Left colon (tissue), 2 donors: ENCODE measurements at regions of chr16 and their contacts with region 1.

Region 1: GRCh38 chr16:46607529-46607928 is 13.7 kb downstream of the SHCBP1 start:
- DNase-seq: no peak
- ATAC-seq: no peak

Region 2: GRCh38 chr16:46555951-46556350 is 51.6 kb before region 1 on chr16:
- intact Hi-C with region 1: loop called in 1 of 2 experiments (anchors 5 kb)
- DNase-seq: no peak
- ATAC-seq: no peak

Region 3: GRCh38 chr16:46711106-46712058 is 103.9 kb after region 1 on chr16:
- intact Hi-C with region 1: no loop called
- DNase-seq: no peak
- ATAC-seq: no peak